ENCODE measurements at regions of chr4 and their contacts with region 1.

Region 1: GRCh38 chr4:7043521-7044414 is 596 bp downstream of the TADA2B start:
- DNase-seq: peak in 1 of 2 donors; percentile 50
- H3K4me3 ChIP-seq: peak overlapping the region; percentile 74 to 94
- H3K27ac ChIP-seq: peak overlapping the region; percentile 72 to 81
- H3K4me1 ChIP-seq: peaks cover 6 to 8% of the 10 kb centered on the region in 2 donors
- H3K27me3 ChIP-seq: no peaks in the 10 kb centered on the region
- CTCF ChIP-seq: no peak
- POLR2A ChIP-seq: peak in 1 of 2 donors; percentile 16

Region 2: GRCh38 chr4:7067452-7068278 is 23.9 kb after region 1 on chr4 and contains the start of gene GRPEL1:
- intact Hi-C with region 1: loop called (anchors 2 kb)
- DNase-seq: peak; percentile 100
- H3K4me3 ChIP-seq: peak within 1 kb of the TSS; percentile 66 to 73
- H3K27ac ChIP-seq: peak within 1 kb of the TSS; percentile 88 to 92
- H3K4me1 ChIP-seq: peaks cover 0 to 16% of the 10 kb centered on the region in 2 donors
- H3K27me3 ChIP-seq: no peaks in the 10 kb centered on the region
- CTCF ChIP-seq: peak in 1 of 4 experiments; percentile 24
- POLR2A ChIP-seq: peak; percentile 87 to 92
- total RNA-seq, gene GRPEL1: 7.4 to 55.0 (median 21.4) TPM

Region 3: GRCh38 chr4:7206911-7207567 is 163.3 kb after region 1 on chr4:
- intact Hi-C with region 1: no loop called
- DNase-seq: peak; percentile 88 to 92
- H3K4me3 ChIP-seq: no peak overlapping the region
- H3K27ac ChIP-seq: peak overlapping the region; percentile 88 to 89
- H3K4me1 ChIP-seq: peaks cover 0 to 4% of the 10 kb centered on the region in 2 donors
- H3K27me3 ChIP-seq: no peaks in the 10 kb centered on the region
- CTCF ChIP-seq: no peak
- POLR2A ChIP-seq: no peak

Measured in uterus (tissue), 4 donors.